SK-N-SH (cell line): ENCODE measurements at regions of chr16 and their contacts with region 1.

Region 1: DNA sequence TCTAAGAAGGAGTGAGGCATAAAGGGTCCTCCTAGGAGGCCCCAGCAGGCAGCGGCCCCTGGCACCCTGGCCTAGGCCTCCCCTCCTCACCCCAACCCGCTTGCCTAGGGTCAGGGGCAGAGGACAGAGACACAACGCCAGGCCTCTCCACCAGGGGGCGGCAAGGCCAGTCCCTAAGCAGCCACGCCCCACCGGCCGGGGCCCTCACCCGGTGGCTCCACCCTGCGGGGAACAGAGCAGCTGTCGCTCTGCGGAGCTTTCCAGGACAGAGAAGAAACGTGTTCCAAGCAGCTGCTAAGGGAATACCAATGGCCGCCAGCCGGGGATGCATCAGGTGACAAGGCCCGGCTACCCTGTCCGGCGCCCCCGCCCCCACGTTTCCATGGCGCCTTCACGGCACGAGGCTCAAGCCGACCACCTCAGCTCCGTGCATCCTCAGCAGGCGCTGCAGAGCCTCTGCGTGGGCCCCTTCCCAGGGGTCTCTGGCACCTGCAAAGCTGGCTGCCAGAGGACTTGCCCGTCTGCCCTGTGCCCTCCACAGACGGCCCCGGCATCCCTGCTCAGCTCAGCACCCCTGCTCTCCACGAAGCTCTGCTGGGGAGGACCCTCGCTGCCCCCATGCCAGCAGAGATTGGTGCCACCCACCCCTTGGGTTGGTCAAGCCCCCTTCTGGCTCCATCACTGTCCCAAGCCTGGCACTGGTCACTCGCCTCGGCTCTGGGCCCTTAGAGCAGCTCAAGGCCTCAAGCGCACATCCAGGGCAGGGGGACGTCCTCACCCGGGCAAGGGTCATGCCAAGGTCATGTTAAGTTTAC is 5.6 kb downstream of the ZNF598 start:
- DNase-seq: peak; percentile 99
- H3K4me3 ChIP-seq: no peak overlapping the region; a peak in 1 of 4 replicates
- H3K27ac ChIP-seq: peak overlapping the region in 1 of 2 experiments; percentile 48; a peak in 2 of 4 replicates
- H3K4me1 ChIP-seq: peaks cover 24 to 54% of the 10 kb centered on the region in 2 experiments; a peak in 3 of 4 replicates
- H3K27me3 ChIP-seq: no peaks in the 10 kb centered on the region
- CTCF ChIP-seq: peak; percentile 91
- EP300 ChIP-seq: no peak
- RAD21 ChIP-seq: peak; percentile 59

Region 2: GRCh38 chr16:1950047-1950446 is 54.0 kb before region 1 on chr16:
- CTCF ChIA-PET with region 1: no interaction called
- POLR2A ChIA-PET with region 1: no interaction called
- DNase-seq: no peak
- H3K4me3 ChIP-seq: no peak overlapping the region
- H3K27ac ChIP-seq: no peak overlapping the region
- H3K4me1 ChIP-seq: peaks cover 0 to 9% of the 10 kb centered on the region in 2 experiments; a peak in 1 of 4 replicates
- H3K27me3 ChIP-seq: no peaks in the 10 kb centered on the region
- CTCF ChIP-seq: no peak
- EP300 ChIP-seq: no peak
- RAD21 ChIP-seq: no peak

Region 3: GRCh38 chr16:1964506-1965395 is 39.3 kb before region 1 on chr16 and contains the start of gene RPS2:
- CTCF ChIA-PET with region 1: interaction called, 15 read pairs
- POLR2A ChIA-PET with region 1: interaction called, 11 read pairs
- DNase-seq: peak; percentile 100
- H3K4me3 ChIP-seq: peak within 1 kb of the TSS; percentile 86 to 98
- H3K27ac ChIP-seq: peak within 1 kb of the TSS; percentile 76 to 90
- H3K4me1 ChIP-seq: peaks cover 0 to 41% of the 10 kb centered on the region in 2 experiments; a peak in 1 of 4 replicates
- H3K27me3 ChIP-seq: no peaks in the 10 kb centered on the region
- CTCF ChIP-seq: 0 out of 2 replicates have a peak, but pooled peaks have one; percentile 5
- EP300 ChIP-seq: peak; percentile 16 to 27; a peak in 1 of 4 replicates
- RAD21 ChIP-seq: no peak
- polyA plus RNA-seq, gene RPS2: 4,622 and 6,384 TPM in 2 replicates

Region 4: GRCh38 chr16:1983544-1984346 is 20.3 kb before region 1 on chr16 and contains the start of gene GFER:
- CTCF ChIA-PET with region 1: interaction called, 108 read pairs
- POLR2A ChIA-PET with region 1: interaction called, 4 read pairs
- DNase-seq: peak; percentile 99
- H3K4me3 ChIP-seq: peak within 1 kb of the TSS; percentile 77 to 80
- H3K27ac ChIP-seq: peak within 1 kb of the TSS; percentile 66 to 95
- H3K4me1 ChIP-seq: peaks cover 8 to 21% of the 10 kb centered on the region in 2 experiments; a peak in 2 of 4 replicates
- H3K27me3 ChIP-seq: no peaks in the 10 kb centered on the region
- CTCF ChIP-seq: peak; percentile 50
- EP300 ChIP-seq: no peak
- RAD21 ChIP-seq: no peak
- polyA plus RNA-seq, gene GFER: 13.3 and 20.4 TPM in 2 replicates

Region 5: DNA sequence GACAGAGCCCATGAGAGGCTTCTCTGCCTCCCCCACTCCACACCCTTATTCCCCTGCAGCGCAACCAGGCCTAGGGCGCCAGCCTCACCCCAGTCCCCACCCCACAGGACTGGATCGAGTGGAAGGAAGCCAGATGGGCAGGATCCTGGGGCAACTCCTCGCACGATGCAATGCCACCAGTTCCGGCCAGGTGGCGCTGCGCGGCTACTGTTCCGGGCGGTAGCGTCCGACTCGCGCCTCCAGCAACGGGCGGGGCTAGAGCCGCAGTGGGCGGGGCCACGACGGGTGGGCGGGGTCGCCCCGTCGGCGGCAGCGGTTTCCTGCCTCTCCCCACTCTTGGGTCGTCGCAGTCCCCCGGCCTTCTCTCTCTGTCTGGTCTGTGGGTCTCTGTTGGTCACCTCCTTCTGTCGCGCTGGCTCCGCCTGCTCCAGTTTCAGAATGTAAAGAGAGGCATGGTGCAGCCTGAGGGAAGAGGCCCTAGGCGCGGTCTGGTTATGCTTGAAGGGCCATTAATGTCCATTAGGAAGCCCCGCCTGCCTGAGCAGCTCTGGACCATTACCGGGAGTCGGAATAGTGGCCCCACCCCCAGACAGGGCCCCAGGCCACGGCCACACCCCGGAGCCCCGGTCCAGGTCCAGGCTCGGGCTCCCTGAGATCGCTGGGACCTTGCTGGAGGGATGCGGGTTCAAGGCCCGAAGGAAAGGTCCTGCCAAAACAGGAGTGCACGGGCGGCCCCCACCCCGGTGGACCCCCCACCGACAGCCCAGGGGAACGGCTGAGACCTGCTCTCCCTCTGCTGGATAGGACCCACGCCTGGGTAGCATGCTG is 19.3 kb after region 1 on chr16:
- CTCF ChIA-PET with region 1: interaction called, 25 read pairs
- POLR2A ChIA-PET with region 1: interaction called, 3 read pairs
- DNase-seq: peak; percentile 97
- H3K4me3 ChIP-seq: peak overlapping the region; percentile 40 to 65
- H3K27ac ChIP-seq: peak overlapping the region; percentile 65 to 86
- H3K4me1 ChIP-seq: peaks cover 6 to 28% of the 10 kb centered on the region in 2 experiments; a peak in 2 of 4 replicates
- H3K27me3 ChIP-seq: peaks cover 4% of the 10 kb centered on the region; the same call in 1 of the 2 replicates
- CTCF ChIP-seq: peak; percentile 89
- EP300 ChIP-seq: no peak
- RAD21 ChIP-seq: peak; percentile 94

Region 6: DNA sequence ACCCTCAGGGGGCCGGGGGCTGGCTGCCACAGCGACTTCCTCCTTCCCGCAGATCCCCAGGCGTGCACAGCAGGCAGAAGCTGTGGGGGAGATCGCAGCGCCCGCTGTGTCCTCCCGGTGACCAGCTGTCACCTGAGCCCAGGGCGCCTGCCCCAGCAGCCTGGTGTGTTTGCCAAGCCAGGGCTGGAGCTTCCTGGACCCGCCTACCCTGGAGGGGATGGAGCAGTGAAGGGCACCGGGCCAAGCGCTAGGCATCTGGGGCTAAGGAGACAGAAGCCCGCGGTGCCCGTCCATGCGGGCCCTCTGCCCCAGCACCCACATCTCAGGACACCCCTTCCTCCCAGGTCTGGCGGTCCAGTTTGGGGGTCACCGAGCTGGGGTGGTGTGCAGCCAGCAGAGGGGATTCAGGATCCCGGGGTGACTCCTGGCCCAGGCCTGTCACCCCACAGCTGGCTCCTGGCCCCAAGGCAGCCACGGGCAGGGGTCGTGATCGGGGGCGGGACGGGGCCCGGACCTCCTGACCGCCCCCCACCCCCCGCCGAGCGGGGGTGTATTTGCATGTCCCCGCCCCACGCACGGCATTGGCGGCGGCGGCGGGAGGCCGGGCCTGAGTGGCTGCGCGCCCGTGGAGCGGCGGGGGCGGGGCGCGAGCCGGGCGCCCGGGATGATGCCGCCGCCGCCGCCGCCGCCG is 144.1 kb after region 1 on chr16 and contains the start of gene RAB26:
- CTCF ChIA-PET with region 1: interaction called, 26 read pairs
- POLR2A ChIA-PET with region 1: interaction called, 5 read pairs
- DNase-seq: peak; percentile 91
- H3K4me3 ChIP-seq: peak within 1 kb of the TSS; percentile 50 to 60
- H3K27ac ChIP-seq: peak within 1 kb of the TSS; percentile 33 to 80; a peak in 3 of 4 replicates
- H3K4me1 ChIP-seq: peaks cover 41 to 62% of the 10 kb centered on the region in 2 experiments; a peak in 3 of 4 replicates
- H3K27me3 ChIP-seq: no peaks in the 10 kb centered on the region
- CTCF ChIP-seq: no peak
- EP300 ChIP-seq: no peak
- RAD21 ChIP-seq: no peak
- polyA plus RNA-seq, gene RAB26: 14.3 and 19.5 TPM in 2 replicates